T-cell (primary cell): ENCODE measurements at regions of chr10 and their contacts with region 1.

Region 1: GRCh38 chr10:97278491-97278989 is 13.9 kb downstream of the ARHGAP19 start:
- DNase-seq: peak in 1 of 35 experiments; percentile 73
- ATAC-seq: peak; percentile 69 to 89 (median 76)
- H3K4me3 ChIP-seq: no peak overlapping the region
- H3K4me3 Mint-ChIP-seq: no peak overlapping the region
- H3K27ac ChIP-seq: no peak overlapping the region
- H3K27ac Mint-ChIP-seq: no peak overlapping the region
- H3K4me1 ChIP-seq: no peaks in the 10 kb centered on the region
- H3K4me1 Mint-ChIP-seq: peaks cover 9% of the 10 kb centered on the region in 3 donors
- H3K27me3 ChIP-seq: no peaks in the 10 kb centered on the region
- H3K27me3 Mint-ChIP-seq: no peaks in the 10 kb centered on the region

Region 2: DNA sequence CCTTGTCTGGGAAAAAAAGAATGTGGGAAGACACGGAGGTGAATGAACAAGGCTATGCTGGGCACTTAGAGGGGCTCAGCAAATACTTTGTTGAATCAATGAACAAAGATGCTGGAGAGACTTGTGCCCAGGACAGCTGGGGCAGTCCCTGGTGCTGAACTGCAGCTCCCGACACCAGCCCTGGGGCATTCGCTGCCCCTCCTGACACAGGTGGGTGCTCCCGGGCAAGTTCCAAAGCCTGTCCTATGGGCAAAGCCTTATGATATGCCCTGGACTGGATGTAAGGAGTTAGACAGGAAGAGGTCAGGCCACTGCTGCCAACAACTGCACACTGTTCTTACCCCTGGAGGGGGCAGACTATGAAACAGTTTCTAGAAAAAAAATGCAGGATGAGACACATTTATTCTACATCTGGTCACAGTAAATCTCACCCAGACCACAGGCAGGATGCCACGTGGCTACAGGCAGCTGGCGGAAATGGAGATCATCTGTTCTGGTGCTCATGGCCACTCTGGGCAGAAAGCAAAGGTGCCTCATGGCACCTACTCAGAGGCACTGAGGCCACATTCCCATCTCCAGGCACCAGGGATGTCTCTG is 77.9 kb after region 1 on chr10:
- CTCF ChIA-PET with region 1: interaction called, 10 to 20 read pairs
- POLR2A ChIA-PET with region 1: no interaction called
- DNase-seq: peak in 13 of 35 experiments; percentile 4 to 49 (median 16)
- ATAC-seq: peak in 2 of 4 experiments; percentile 16 to 24
- H3K4me3 ChIP-seq: no peak overlapping the region
- H3K4me3 Mint-ChIP-seq: no peak overlapping the region
- H3K27ac ChIP-seq: no peak overlapping the region
- H3K27ac Mint-ChIP-seq: no peak overlapping the region
- H3K4me1 ChIP-seq: peaks cover 0 to 13% of the 10 kb centered on the region in 2 experiments
- H3K4me1 Mint-ChIP-seq: peaks cover 0 to 4% (median 0%) of the 10 kb centered on the region in 3 donors
- H3K27me3 ChIP-seq: no peaks in the 10 kb centered on the region
- H3K27me3 Mint-ChIP-seq: no peaks in the 10 kb centered on the region